ENCODE measurements at regions of chr7 and their contacts with region 1.

Region 1: GRCh38 chr7:66700633-66701131 is 39.9 kb upstream of the RABGEF1 start:
- DNase-seq: no peak
- ATAC-seq: no peak
- H3K4me3 ChIP-seq: no peak overlapping the region
- H3K27ac ChIP-seq: no peak overlapping the region
- H3K4me1 ChIP-seq: peaks cover 7% of the 10 kb centered on the region
- H3K27me3 ChIP-seq: no peaks in the 10 kb centered on the region
- CTCF ChIP-seq: no peak
- POLR2A ChIP-seq: no peak
- RAD21 ChIP-seq: no peak

Region 2: DNA sequence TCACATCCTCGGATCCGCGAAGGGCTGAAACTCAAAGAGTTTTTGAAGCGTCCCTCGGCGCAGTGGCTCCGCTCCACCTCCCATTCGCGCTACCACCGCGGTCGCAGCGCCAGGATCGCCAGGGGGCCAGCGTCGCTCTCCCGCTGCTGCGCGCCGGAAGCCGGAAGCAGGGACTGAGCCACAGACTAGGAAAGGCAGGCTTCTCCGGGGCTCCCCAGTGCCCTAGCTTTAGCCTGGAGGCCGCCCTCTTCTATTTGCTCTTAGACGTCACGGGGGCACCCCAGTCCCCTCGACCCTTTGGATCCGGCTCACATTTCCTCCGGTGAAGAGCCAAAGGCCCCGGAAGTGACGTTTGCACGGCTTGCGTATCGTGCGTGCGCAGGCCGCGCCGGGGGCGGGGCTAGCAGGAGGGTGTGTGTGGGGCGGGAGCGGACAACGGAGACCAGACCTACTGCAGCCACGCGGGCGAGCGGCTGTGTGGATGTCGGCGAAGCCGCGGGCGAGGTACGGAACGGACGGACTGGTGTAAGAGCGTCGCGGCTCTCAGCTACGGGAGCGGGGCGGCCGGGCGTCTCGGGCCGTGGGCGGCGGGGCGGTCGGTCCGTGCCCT is 46.5 kb before region 1 on chr7:
- CTCF ChIA-PET with region 1: no interaction called
- POLR2A ChIA-PET with region 1: interaction called, 11 read pairs
- dilution Hi-C with region 1: no loop called
- in situ Hi-C with region 1: no loop called
- intact Hi-C with region 1: no loop called
- DNase-seq: peak; percentile 97
- ATAC-seq: peak; percentile 93
- H3K4me3 ChIP-seq: peak overlapping the region; percentile 60
- H3K27ac ChIP-seq: peak overlapping the region; percentile 88
- H3K4me1 ChIP-seq: peaks cover 4% of the 10 kb centered on the region; the same call in 1 of the 2 replicates
- H3K27me3 ChIP-seq: no peaks in the 10 kb centered on the region
- CTCF ChIP-seq: 0 out of 2 replicates have a peak, but pooled peaks have one; percentile 20
- POLR2A ChIP-seq: peak; percentile 98
- RAD21 ChIP-seq: peak; percentile 8; the same call in 1 of the 2 replicates